Heart left ventricle (tissue), 16 donors: ENCODE measurements at regions of chr1 and their contacts with region 1.

Region 1: DNA sequence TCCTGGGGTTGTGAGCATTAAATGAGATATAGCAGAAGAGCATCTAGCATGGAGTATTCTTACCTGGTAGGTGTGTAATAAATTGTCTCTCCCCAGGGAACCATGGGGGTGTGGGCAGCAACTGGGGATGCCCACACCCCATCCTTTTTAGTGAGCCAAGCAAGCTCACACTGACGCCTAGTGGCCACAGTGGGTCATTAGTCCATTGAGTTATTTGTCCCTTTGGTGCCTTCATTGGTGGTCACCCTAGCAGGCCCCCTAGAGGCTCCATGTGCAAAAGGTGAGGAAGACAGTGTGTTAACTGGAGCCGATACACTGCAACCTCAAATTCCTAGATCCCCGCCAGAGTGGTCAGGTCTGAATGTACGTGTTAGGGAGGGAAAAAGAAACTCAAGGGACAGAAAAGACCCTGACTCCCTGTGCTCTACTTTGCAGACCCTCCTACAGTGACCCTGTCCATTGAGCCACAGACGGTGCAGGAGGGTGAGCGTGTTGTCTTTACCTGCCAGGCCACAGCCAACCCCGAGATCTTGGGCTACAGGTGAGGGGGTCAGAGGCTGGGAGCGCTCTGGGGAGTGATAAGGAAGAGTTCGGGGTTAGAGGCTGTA is 93.3 kb upstream of the CD1D start:
- DNase-seq: peak in 4 of 5 donors; percentile 50 to 57 (median 52)
- ATAC-seq: peak; percentile 41 to 70 (median 62)
- H3K4me3 ChIP-seq: no peak overlapping the region
- H3K27ac ChIP-seq: no peak overlapping the region
- H3K4me1 ChIP-seq: no peaks in the 10 kb centered on the region
- H3K27me3 ChIP-seq: no peaks in the 10 kb centered on the region
- CTCF ChIP-seq: peak; percentile 78 to 90 (median 84)
- POLR2A ChIP-seq: no peak

Region 2: GRCh38 chr1:157969697-157970485 is 117.5 kb before region 1 on chr1:
- intact Hi-C with region 1: loop called in 1 of 10 experiments (anchors 5 kb)
- DNase-seq: peak in 4 of 5 donors; percentile 36 to 51 (median 39)
- ATAC-seq: peak; percentile 63 to 85 (median 76)
- H3K4me3 ChIP-seq: no peak overlapping the region
- H3K27ac ChIP-seq: peak overlapping the region in 2 of 12 donors; percentile 49 to 57
- H3K4me1 ChIP-seq: peaks cover 0 to 18% (median 8%) of the 10 kb centered on the region in 12 donors
- H3K27me3 ChIP-seq: no peaks in the 10 kb centered on the region
- CTCF ChIP-seq: peak; percentile 56 to 85 (median 74)
- POLR2A ChIP-seq: no peak

Region 3: GRCh38 chr1:158035976-158036583 is 51.3 kb before region 1 on chr1:
- intact Hi-C with region 1: loop called in 5 of 10 experiments (anchors 5 to 10 kb)
- DNase-seq: peak in 2 of 5 donors; percentile 35 to 51
- ATAC-seq: peak in 2 of 4 donors; percentile 40 to 52
- H3K4me3 ChIP-seq: no peak overlapping the region
- H3K27ac ChIP-seq: no peak overlapping the region
- H3K4me1 ChIP-seq: peaks cover 0 to 47% (median 18%) of the 10 kb centered on the region in 12 donors
- H3K27me3 ChIP-seq: no peaks in the 10 kb centered on the region
- CTCF ChIP-seq: peak; percentile 63 to 83 (median 76)
- POLR2A ChIP-seq: no peak

Region 4: DNA sequence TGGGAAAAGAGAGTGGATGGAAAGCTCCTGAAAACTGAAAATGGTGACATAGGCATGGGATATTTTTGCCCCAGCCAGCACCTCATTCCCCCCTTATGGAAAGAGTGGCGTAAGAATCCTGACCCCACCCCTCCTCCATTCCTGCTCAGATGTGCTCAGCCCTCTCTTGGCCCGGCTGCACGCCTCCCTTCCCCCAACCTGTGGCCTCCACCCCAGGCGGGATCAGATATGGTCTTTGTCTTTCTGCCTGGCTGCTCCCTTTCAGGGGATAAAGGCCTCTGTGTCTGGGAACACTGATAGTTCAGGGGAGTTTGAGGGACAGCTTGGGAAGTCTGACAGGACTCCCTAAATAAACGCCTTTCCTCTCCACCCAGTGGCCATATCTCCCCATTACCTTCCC is 44.2 kb before region 1 on chr1:
- intact Hi-C with region 1: loop called in 5 of 10 experiments (anchors 5 to 10 kb)
- DNase-seq: no peak
- ATAC-seq: peak in 2 of 4 donors; percentile 43 to 44
- H3K4me3 ChIP-seq: no peak overlapping the region
- H3K27ac ChIP-seq: no peak overlapping the region
- H3K4me1 ChIP-seq: peaks cover 0 to 60% (median 16%) of the 10 kb centered on the region in 12 donors
- H3K27me3 ChIP-seq: peaks cover 0 to 3% (median 0%) of the 10 kb centered on the region in 9 donors
- CTCF ChIP-seq: no peak
- POLR2A ChIP-seq: no peak